Right ventricle myocardium superior (tissue), 1 donor: ENCODE measurements at regions of chr20 and their contacts with region 1.

Region 1: DNA sequence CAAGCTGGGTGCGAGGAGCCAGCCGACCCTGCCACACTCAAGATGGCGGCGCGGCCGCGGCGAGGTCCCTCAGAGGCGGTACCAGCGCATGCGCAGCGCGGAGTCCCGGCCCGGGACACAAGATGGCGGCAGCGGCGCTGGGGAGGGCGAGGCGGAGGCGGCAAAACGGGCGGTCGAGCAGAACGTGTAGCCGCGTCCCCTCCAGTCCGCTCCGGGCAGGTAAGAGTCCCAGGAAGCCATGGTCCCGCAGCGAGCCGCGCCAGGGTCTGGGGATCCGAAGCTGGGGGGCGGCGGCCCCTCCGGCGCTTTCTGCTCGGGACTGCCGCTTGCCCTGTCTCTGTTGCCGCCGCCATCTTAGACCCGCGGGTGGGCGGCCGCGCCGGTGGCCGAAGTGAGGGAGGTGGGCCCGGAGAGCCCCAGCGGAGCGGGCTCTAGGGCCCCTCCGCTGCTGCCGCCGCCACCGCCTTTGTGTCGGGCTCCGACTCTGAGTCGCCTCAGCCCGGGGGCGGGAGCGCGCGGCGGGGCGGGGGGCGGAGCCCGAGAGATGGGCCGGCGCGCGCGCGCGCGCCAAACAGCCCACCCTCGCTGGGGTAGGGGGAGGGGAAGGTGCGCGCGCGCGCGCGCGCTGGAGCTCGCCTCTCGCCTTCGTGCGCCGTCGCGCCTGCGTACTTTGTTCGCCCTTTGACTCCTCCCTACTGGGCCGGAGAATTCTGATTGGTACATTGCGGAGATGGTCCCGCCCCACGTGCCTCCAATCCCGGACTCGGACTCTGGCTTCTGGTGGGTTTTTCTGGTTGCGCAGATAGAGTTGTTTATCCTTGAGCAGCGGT is at the start of gene PCIF1:
- DNase-seq: peak; percentile 99
- ATAC-seq: peak; percentile 93
- total RNA-seq, gene PCIF1: 21.8 TPM

Region 2: GRCh38 chr20:45044084-45044573 is 890.7 kb before region 1 on chr20:
- intact Hi-C with region 1: loop called (anchors 10 kb)
- DNase-seq: no peak
- ATAC-seq: peak; percentile 75

Region 3: DNA sequence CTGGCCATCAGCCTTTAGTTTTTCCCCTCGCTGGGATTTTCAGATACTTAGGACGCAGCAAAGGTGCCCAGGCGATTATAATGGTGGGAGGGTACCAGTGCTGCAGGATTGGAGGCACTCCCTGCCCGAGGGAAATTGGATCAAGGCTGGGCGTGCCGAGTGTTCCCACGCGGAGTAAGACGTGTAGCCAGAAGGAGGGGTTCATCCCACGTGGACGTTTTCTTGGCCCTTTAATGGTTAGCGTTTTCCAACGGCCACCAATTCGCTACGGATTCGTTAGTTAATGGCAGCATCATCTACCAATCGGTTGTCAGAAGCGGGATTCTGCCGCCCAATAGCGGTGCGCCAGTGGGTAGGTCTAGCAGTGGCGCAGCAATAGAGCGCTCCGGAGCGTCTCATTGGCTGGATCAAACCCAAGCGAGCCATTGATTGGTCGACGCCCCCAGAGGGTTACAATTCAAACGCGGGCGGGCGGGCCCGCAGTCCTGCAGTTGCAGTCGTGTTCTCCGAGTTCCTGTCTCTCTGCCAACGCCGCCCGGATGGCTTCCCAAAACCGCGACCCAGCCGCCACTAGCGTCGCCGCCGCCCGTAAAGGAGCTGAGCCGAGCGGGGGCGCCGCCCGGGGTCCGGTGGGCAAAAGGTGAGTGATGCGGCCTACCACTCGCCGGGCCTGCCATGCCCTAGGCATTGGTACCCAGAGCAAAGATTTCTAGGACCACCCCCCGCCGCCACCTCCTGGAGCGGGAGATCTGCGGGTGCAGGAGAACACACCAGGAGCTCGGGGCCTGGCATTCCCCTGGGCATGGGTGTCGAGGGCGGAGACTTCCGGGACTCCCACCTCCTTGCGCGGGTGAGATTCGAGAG is 122.4 kb before region 1 on chr20 and contains the start of gene UBE2C:
- intact Hi-C with region 1: loop called (anchors 5 kb)
- DNase-seq: peak; percentile 98
- ATAC-seq: peak; percentile 99
- total RNA-seq, gene UBE2C: 1.1 TPM

Region 4: GRCh38 chr20:45833030-45833882 is 101.5 kb before region 1 on chr20 and contains the start of gene SNX21:
- intact Hi-C with region 1: loop called (anchors 5 kb)
- DNase-seq: peak; percentile 92
- ATAC-seq: peak; percentile 88
- total RNA-seq, gene SNX21: 22.1 TPM

Region 5: DNA sequence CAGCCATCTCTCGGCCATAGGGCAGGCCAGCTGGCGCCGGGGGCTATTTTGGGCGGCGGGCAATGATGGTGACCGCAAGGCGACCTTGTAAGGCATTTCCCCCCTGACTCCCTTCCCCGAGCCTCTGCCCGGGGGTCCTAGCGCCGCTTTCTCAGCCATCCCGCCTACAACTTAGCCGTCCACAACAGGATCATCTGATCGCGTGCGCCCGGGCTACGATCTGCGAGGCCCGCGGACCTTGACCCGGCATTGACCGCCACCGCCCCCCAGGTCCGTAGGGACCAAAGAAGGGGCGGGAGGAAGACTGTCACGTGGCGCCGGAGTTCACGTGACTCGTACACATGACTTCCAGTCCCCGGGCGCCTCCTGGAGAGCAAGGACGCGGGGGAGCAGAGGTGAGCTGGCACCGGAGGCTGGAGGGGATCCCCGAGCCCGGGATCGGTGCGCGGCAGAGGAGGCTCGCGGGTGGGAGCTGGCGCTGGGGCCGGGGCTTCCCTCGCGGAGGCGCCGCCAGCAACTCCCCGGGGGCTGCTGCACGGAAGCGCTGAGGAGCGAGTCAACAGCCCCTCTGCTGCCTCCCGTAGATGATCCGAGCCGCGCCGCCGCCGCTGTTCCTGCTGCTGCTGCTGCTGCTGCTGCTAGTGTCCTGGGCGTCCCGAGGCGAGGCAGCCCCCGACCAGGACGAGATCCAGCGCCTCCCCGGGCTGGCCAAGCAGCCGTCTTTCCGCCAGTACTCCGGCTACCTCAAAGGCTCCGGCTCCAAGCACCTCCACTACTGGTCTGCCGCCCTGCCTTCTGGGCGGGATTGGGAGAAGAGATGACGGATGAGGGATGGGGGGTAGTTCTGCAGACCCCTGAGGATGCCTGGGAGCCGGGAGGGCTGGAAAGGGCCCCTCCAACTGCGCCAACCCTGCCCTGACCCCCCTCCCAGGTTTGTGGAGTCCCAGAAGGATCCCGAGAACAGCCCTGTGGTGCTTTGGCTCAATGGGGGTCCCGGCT is 43.5 kb before region 1 on chr20 and contains the starts of genes CTSA and NEURL2:
- intact Hi-C with region 1: loop called (anchors 5 kb)
- DNase-seq: peak; percentile 97
- ATAC-seq: peak; percentile 90
- total RNA-seq, gene CTSA: 113 TPM
- total RNA-seq, gene NEURL2: 6.5 TPM

Region 6: DNA sequence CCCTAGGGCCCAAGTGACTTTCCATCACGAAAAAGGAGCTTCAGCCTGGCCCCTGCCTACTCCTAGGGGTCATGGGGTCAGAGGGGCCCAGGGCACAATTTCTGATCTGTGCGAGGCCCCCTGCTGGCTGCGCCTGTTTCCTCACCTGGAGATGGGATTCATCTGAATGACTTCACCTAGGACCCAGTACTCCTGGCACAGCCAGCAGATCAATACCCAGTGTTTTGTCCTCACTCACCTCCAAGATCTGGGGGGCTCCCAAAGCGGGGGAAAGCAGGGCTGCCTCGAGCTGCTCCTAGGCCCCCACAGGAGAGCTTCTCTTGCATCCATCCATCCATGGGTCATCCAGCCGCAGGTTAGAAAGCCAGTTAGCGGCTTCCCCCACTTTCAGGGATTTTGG is 217.1 kb after region 1 on chr20:
- intact Hi-C with region 1: no loop called
- DNase-seq: no peak
- ATAC-seq: no peak